Motor neuron (in vitro differentiated cells): ENCODE measurements at regions of chr7 and their contacts with region 1.

Region 1: DNA sequence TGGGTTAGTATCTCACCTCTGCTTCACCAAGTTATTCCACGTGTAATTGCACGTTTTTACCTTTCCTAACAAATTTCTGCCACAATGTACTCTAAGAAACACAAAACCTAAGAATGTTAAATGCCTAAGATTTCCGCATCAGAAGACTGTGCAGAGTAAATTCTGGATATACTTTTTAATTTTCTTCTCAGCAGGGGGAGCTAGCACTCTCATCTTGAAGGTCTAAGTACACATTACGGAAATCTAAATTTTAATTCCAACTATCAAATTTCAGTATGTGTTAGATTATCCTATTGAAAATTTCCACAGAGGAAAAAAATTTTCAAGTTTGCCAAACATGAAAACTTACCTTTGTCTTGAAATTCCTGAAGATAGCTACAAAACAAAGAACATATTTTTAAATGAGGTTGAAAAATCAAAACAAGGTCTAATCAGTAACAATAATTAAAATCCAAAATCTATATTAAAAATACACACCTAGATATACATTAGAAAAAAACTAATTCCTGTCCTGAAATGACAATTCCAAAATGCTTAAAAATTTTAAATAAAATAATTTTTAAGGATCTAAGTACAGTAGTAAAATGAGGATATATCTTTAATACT is 10.5 kb downstream of the SKAP2 start:
- ATAC-seq: peak in 6 of 8 experiments; percentile 23 to 80 (median 54)
- H3K4me3 ChIP-seq: peak overlapping the region in 3 of 5 donors; percentile 0 to 9 (median 4)
- H3K27ac ChIP-seq: no peak overlapping the region
- H3K4me1 ChIP-seq: peaks cover 9 to 44% of the 10 kb centered on the region in 2 donors

Region 2: DNA sequence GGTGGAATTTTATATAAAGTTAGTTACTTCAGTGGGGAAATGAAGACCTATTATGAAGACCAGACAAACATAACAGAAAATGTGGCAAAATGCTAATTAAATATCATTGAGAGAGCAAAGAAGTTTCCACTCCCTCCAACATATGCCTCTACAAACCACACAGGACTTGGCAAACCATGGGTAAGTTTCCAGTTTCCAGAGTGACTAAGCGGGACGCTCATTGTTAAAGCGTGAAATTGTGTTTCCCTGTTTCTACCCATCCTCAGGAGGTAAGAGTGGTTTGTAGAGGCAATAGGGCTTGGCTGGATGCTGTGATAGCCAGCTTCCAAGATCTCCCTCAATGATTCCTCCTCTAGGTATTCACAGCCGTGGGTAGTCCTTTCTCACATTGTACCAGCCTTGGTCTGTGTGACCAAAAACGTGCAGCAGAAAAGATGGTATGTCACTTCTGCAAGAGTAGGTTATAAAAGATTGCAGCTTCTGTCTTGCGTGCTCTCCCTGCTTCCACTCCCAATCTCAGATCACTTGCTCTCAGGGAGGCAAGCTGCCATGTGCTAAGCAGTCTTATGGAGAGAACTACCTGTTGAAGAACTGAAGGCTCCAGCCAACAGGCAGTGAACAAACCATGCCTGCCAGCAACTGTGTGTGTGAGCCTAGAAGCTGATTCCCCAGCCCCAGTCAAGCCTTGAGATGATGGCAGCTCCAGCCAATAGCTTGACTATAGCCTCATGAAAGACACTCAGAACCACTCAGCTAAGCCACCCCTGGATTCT is 616.7 kb before region 1 on chr7:
- in situ Hi-C with region 1: no loop called
- ATAC-seq: no peak
- H3K4me3 ChIP-seq: no peak overlapping the region
- H3K27ac ChIP-seq: no peak overlapping the region
- H3K4me1 ChIP-seq: no peaks in the 10 kb centered on the region

Region 3: GRCh38 chr7:27095897-27096767 is 242.2 kb after region 1 on chr7 and contains the start of gene HOXA1:
- in situ Hi-C with region 1: loop called in 5 of 9 experiments (anchors 10 to 25 kb)
- ATAC-seq: peak; percentile 66 to 81 (median 76)
- H3K4me3 ChIP-seq: peak within 1 kb of the TSS; percentile 51 to 82 (median 69)
- H3K27ac ChIP-seq: peak within 1 kb of the TSS; percentile 92 to 98
- H3K4me1 ChIP-seq: peaks cover 15 to 21% of the 10 kb centered on the region in 2 donors
- total RNA-seq, gene HOXA1: 2.7 to 44.5 (median 14.4) TPM

Region 4: DNA sequence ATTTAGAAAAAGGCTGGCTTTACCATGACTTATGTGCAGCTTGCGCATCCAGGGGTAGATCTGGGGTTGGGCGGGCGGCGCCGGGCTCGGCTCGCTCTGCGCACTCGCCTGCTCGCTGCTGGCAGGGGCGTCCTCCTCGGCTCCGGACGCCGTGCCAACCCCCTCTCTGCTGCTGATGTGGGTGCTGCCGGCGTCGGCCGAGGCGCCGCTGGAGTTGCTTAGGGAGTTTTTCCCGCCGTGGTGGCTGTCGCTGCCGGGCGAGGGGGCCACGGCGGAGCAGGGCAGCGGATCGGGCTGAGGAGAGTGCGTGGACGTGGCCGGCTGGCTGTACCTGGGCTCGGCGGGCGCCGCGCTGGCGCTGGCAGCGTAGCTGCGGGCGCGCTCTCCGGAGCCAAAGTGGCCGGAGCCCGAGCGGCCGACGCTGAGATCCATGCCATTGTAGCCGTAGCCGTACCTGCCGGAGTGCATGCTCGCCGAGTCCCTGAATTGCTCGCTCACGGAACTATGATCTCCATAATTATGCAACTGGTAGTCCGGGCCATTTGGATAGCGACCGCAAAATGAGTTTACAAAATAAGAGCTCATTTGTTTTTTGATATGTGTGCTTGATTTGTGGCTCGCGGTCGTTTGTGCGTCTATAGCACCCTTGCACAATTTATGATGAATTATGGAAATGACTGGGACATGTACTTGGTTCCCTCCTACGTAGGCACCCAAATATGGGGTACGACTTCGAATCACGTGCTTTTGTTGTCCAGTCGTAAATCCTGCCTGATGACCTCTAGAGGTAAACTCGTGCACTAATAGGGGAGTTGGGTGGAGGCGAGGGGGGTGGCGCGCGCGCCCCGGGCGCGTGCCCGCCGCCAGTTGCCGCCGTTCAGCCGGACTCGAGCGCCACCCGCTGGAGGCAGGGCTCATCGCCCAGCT is 289.4 kb after region 1 on chr7 and contains the start of gene HOXA5:
- in situ Hi-C with region 1: loop called in 2 of 9 experiments (anchors 10 kb)
- ATAC-seq: peak in 7 of 8 experiments; percentile 36 to 89 (median 81)
- H3K4me3 ChIP-seq: peak within 1 kb of the TSS; percentile 46 to 81 (median 63)
- H3K27ac ChIP-seq: peak within 1 kb of the TSS; percentile 92 to 93
- H3K4me1 ChIP-seq: peaks cover 5 to 15% of the 10 kb centered on the region in 2 donors
- total RNA-seq, gene HOXA5: 10.0 to 121 (median 73.0) TPM